Activated CD4-positive, alpha-beta T cell treated with anti-CD3 and anti-CD28 coated beads, Interleukin-2, amount 10 ng/mL, durations not matched to agents 24 days and 14 days (primary cell): ENCODE measurements at regions of chr15 and their contacts with region 1.

Region 1: GRCh38 chr15:59688841-59689625 is at the start of gene BNIP2:
- DNase-seq: peak; percentile 100
- H3K4me3 Mint-ChIP-seq: peak within 1 kb of the TSS; percentile 95
- H3K27ac Mint-ChIP-seq: peak within 1 kb of the TSS; percentile 98
- H3K4me1 Mint-ChIP-seq: peaks cover 40% of the 10 kb centered on the region
- H3K27me3 Mint-ChIP-seq: no peaks in the 10 kb centered on the region
- total RNA-seq, gene BNIP2: 55.1 and 57.2 TPM in 2 replicates

Region 2: DNA sequence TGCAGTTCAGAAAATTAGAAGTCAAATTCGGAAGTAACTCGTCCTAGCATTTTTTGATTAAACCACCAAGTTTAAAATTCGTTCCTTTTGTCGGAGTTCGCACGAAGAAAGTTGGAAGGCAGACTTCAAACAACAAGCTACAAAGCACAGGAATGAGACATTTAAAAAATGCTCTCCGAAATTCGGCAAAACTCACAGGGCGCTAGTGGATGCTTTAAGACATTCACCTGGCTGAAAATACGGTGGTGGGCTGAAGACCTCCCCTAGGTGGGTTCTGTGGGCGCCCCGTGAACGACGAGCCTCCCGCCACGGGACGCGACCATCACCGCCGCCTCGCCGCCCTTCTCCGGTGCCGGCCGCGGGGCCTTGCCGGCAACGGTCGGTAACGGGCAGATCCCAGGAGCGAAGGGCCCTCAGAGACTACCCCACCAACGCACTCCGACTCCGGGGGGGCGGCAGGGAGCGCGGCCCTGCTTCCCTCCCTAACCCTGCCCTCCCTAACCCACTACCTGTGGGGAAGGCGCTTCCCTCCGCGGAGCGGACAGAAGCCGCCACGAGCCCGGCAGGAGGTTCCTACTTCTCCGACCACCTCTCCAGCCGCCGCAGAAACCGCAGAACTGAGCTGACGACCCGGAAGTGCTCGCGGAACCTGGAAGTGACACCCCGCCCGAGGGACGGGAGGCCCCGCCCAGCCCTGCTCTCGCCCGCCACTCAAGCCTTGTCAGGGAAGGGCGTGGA is 32.0 kb before region 1 on chr15 and contains the start of gene GTF2A2:
- intact Hi-C with region 1: loop called (anchors 1 kb)
- DNase-seq: peak; percentile 99
- H3K4me3 Mint-ChIP-seq: no peak within 1 kb of the TSS
- H3K27ac Mint-ChIP-seq: peak within 1 kb of the TSS; percentile 90
- H3K4me1 Mint-ChIP-seq: peaks cover 6% of the 10 kb centered on the region
- H3K27me3 Mint-ChIP-seq: no peaks in the 10 kb centered on the region
- total RNA-seq, gene GTF2A2: 192 and 200 TPM in 2 replicates